ENCODE measurements at regions of chr9 and their contacts with region 1.

Region 1: DNA sequence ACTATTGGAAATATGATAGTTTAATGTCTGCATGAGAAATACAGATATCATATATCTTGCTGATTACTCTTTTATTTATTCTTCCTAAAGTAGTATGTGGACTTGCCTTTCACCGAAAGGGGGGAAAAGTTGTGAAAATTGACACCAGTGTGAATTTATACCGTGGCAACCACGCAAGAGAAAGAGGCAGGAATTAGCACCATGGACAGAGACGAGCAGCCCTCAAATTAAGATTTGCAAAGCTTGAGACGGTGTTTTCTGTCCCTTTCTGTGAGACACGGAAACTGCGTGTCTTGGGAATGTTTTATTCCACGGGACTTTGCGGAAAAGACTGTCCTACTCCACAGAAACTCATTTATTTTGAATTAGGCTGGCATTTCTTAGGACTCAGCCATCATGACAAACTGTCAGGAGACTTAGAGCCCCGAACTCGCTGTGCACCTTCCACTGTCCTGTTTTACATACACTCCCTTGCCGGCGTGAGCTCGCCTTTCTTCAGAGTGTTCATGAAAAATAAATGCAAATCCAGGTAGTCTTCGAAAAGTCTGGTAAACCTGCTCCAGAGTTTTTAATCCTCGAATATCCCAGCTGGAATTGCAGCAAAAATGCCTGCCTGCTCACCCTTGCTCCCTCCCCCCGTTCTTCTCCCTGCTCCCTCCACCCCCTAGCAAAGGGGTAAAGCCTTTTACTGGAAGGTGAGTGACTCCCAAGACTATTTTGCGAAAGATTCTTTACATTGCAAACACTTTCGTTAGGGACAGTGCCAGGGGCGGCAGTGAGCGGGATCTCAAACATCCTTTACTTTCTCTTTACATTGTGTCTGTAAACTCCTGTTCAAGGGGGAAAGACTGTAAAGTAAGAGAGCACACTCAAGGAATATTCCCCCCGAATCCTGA is 3.8 kb upstream of the ELAVL2 start:
- DNase-seq: no peak
- H3K4me3 ChIP-seq: no peak overlapping the region
- H3K27ac ChIP-seq: no peak overlapping the region
- H3K4me1 ChIP-seq: no peaks in the 10 kb centered on the region
- H3K27me3 ChIP-seq: peaks cover 20% of the 10 kb centered on the region
- CTCF ChIP-seq: no peak

Region 2: GRCh38 chr9:23779220-23779619 is 50.6 kb before region 1 on chr9:
- CTCF ChIA-PET with region 1: no interaction called
- POLR2A ChIA-PET with region 1: no interaction called
- intact Hi-C with region 1: no loop called
- DNase-seq: no peak
- H3K4me3 ChIP-seq: no peak overlapping the region
- H3K27ac ChIP-seq: no peak overlapping the region
- H3K4me1 ChIP-seq: no peaks in the 10 kb centered on the region
- H3K27me3 ChIP-seq: no peaks in the 10 kb centered on the region
- CTCF ChIP-seq: no peak

Region 3: GRCh38 chr9:23790351-23791260 is 39.2 kb before region 1 on chr9:
- CTCF ChIA-PET with region 1: no interaction called
- POLR2A ChIA-PET with region 1: no interaction called
- intact Hi-C with region 1: loop called (anchors 2 kb)
- DNase-seq: no peak
- H3K4me3 ChIP-seq: no peak overlapping the region
- H3K27ac ChIP-seq: no peak overlapping the region
- H3K4me1 ChIP-seq: no peaks in the 10 kb centered on the region
- H3K27me3 ChIP-seq: no peaks in the 10 kb centered on the region
- CTCF ChIP-seq: no peak

Region 4: DNA sequence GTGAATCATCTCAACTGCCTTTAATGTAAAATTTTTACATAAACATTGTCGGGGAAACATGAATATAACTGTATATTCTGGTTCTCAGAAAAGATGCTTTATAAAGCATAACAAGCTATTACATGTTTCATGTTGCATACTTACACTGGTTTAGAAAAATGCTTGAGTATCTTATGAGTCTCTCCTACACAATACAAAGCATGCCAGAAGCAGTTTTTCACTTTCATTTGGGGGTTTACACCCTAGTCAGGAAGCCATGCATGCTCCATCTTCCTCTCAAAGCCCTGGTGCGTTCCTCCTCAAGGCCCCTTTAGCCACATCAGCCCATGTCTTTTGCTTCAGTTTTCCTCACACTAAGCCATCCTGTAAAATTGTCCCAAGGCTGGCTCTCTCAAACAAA is 26.6 kb before region 1 on chr9:
- CTCF ChIA-PET with region 1: no interaction called
- POLR2A ChIA-PET with region 1: no interaction called
- intact Hi-C with region 1: no loop called
- DNase-seq: no peak
- H3K4me3 ChIP-seq: no peak overlapping the region
- H3K27ac ChIP-seq: no peak overlapping the region
- H3K4me1 ChIP-seq: no peaks in the 10 kb centered on the region
- H3K27me3 ChIP-seq: no peaks in the 10 kb centered on the region
- CTCF ChIP-seq: no peak

Measured in PC-9 (cell line).